ENCODE measurements at regions of chrX and their contacts with region 1.

Region 1: DNA sequence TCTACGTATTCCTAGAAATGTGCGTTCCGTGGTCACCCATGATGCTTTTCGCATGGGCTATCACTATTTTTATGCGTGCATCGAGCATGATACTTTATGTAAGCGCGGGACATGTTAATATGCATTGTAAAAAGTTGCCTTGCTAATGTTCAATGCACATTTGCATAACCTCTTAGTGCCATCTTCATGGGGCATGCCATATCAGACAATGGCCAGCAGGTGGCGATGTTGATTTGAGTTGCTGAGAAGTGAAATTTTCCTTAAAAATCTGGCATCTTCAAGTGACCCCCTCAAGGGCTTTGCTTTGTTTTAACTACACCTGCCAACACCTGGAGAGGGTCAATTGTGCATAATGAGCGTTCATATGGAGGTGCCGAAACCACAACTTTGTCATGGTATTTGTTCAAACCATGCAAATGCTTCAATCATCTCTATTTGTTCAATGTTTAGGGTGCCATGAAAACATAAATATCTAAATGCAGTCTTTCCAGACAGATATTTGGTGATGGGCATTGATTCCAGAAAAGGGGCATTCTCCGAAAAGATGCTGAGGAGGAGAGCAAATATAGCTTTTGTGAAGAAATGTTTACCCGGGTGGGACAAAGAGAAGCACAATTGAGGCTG is 833.9 kb upstream of the PRKX start:
- DNase-seq: peak in 1 of 2 experiments; percentile 31
- H3K4me3 ChIP-seq: no peak overlapping the region
- H3K4me3 Mint-ChIP-seq: no peak overlapping the region
- H3K27ac Mint-ChIP-seq: no peak overlapping the region
- H3K4me1 ChIP-seq: no peaks in the 10 kb centered on the region
- H3K4me1 Mint-ChIP-seq: peaks cover 5% of the 10 kb centered on the region
- H3K27me3 ChIP-seq: no peaks in the 10 kb centered on the region
- H3K27me3 Mint-ChIP-seq: no peaks in the 10 kb centered on the region
- CTCF ChIP-seq: peak; percentile 65 to 70

Region 2: GRCh38 chrX:3962511-3963311 is 584.6 kb before region 1 on chrX:
- CTCF ChIA-PET with region 1: interaction called, 4 read pairs
- POLR2A ChIA-PET with region 1: no interaction called
- intact Hi-C with region 1: loop called (anchors 5 kb)
- DNase-seq: peak in 1 of 2 experiments; percentile 36
- H3K4me3 ChIP-seq: no peak overlapping the region
- H3K4me3 Mint-ChIP-seq: peak overlapping the region; percentile 46
- H3K27ac Mint-ChIP-seq: no peak overlapping the region
- H3K4me1 ChIP-seq: no peaks in the 10 kb centered on the region
- H3K4me1 Mint-ChIP-seq: peaks cover 7% of the 10 kb centered on the region
- H3K27me3 ChIP-seq: no peaks in the 10 kb centered on the region
- H3K27me3 Mint-ChIP-seq: no peaks in the 10 kb centered on the region
- CTCF ChIP-seq: peak; percentile 40 to 52

Region 3: GRCh38 chrX:4263030-4263803 is 284.1 kb before region 1 on chrX:
- CTCF ChIA-PET with region 1: no interaction called
- POLR2A ChIA-PET with region 1: no interaction called
- intact Hi-C with region 1: loop called (anchors 10 kb)
- DNase-seq: peak in 1 of 2 experiments; percentile 4
- H3K4me3 ChIP-seq: no peak overlapping the region
- H3K4me3 Mint-ChIP-seq: no peak overlapping the region
- H3K27ac Mint-ChIP-seq: no peak overlapping the region
- H3K4me1 ChIP-seq: no peaks in the 10 kb centered on the region
- H3K4me1 Mint-ChIP-seq: no peaks in the 10 kb centered on the region
- H3K27me3 ChIP-seq: no peaks in the 10 kb centered on the region
- H3K27me3 Mint-ChIP-seq: no peaks in the 10 kb centered on the region
- CTCF ChIP-seq: peak in 1 of 2 experiments; percentile 5

Region 4: DNA sequence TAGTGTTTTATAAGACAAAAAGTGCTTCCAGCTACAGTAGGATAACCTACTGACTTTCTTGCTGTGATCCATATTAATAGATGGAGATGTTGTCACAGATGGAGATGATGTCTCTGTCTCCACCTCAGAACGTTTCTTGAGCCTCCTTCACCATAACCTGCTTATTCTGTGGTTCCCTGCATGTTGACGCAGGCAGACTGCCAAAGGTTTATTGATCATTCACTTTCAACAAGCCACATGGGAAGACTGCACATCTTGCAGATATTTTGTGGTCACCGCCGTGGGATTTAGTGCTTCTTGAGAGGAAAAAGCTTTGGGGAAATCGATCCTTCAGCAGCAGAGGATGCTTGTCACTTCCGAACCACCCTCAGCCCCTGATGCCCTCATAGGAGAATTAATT is 109.1 kb after region 1 on chrX:
- CTCF ChIA-PET with region 1: no interaction called
- POLR2A ChIA-PET with region 1: no interaction called
- intact Hi-C with region 1: no loop called
- DNase-seq: no peak
- H3K4me3 ChIP-seq: no peak overlapping the region
- H3K4me3 Mint-ChIP-seq: no peak overlapping the region
- H3K27ac Mint-ChIP-seq: no peak overlapping the region
- H3K4me1 ChIP-seq: no peaks in the 10 kb centered on the region
- H3K4me1 Mint-ChIP-seq: no peaks in the 10 kb centered on the region
- H3K27me3 ChIP-seq: no peaks in the 10 kb centered on the region
- H3K27me3 Mint-ChIP-seq: no peaks in the 10 kb centered on the region
- CTCF ChIP-seq: no peak

Region 5: DNA sequence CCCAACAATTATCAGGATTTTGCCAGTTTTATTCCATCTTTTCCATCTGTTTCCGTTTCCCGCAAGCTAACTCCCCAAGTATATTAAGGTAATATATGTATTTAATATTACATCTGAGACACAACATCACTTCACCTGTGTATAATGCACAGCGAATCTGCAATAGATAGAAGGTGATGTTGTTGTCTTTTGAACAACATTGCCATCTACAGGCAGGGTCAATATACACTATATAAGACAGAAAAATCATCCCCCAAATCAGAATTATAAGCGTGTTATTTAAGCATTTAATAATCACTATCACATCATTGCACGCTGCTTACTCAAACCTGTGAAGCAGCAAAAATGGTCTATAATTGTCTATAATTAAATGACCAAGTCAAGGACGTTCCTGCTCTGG is 565.8 kb after region 1 on chrX:
- CTCF ChIA-PET with region 1: no interaction called
- POLR2A ChIA-PET with region 1: no interaction called
- intact Hi-C with region 1: loop called (anchors 1 kb)
- DNase-seq: peak in 1 of 2 experiments; percentile 0
- H3K4me3 ChIP-seq: no peak overlapping the region
- H3K4me3 Mint-ChIP-seq: no peak overlapping the region
- H3K27ac Mint-ChIP-seq: no peak overlapping the region
- H3K4me1 ChIP-seq: no peaks in the 10 kb centered on the region
- H3K4me1 Mint-ChIP-seq: no peaks in the 10 kb centered on the region
- H3K27me3 ChIP-seq: no peaks in the 10 kb centered on the region
- H3K27me3 Mint-ChIP-seq: no peaks in the 10 kb centered on the region
- CTCF ChIP-seq: peak; percentile 23 to 34

Measured in Caco-2 (cell line).